AG04450 (cell line): ENCODE measurements at regions of chr7 and their contacts with region 1.

Region 1: GRCh38 chr7:157273208-157274093 is 63.4 kb upstream of the DNAJB6 start:
- DNase-seq: peak; percentile 62
- H3K4me3 ChIP-seq: no peak overlapping the region
- H3K27ac ChIP-seq: no peak overlapping the region
- H3K27me3 ChIP-seq: no peaks in the 10 kb centered on the region
- CTCF ChIP-seq: peak; percentile 98

Region 2: GRCh38 chr7:156979711-156980110 is 293.7 kb before region 1 on chr7:
- CTCF ChIA-PET with region 1: interaction called, 10 read pairs
- POLR2A ChIA-PET with region 1: no interaction called
- DNase-seq: no peak
- H3K4me3 ChIP-seq: no peak overlapping the region
- H3K27ac ChIP-seq: no peak overlapping the region
- H3K27me3 ChIP-seq: no peaks in the 10 kb centered on the region
- CTCF ChIP-seq: no peak

Region 3: DNA sequence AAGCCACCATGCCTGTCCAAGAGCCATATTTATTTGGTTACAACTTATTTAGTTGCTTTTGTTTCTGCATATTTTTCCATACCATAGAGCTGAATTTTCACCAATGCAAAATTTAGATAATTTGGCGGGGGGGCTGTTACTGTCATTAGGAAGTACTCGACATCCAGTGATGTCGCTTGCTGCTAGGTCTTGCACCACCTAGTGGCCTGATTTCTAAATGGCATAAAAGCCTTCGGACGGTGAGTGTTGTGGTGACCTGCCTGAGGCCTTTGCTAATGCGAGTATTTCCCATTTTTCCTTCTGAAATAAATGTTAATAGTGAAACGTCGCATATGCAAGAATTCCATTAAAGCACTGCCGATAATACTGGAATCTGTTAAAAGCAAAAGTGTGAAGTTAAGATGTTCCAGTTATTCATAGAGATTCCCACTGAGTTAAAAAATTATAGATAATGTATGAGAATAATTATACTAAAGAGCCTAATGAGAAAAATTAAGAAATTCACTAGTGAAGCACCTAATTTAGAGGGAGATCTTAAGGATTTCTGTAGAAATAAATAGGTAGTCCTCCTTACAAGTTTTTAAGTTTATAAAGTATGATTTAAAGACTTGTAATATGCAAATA is 22.7 kb before region 1 on chr7:
- CTCF ChIA-PET with region 1: interaction called, 13 read pairs
- POLR2A ChIA-PET with region 1: no interaction called
- DNase-seq: no peak
- H3K4me3 ChIP-seq: no peak overlapping the region
- H3K27ac ChIP-seq: no peak overlapping the region
- H3K27me3 ChIP-seq: no peaks in the 10 kb centered on the region
- CTCF ChIP-seq: peak; percentile 80

Region 4: DNA sequence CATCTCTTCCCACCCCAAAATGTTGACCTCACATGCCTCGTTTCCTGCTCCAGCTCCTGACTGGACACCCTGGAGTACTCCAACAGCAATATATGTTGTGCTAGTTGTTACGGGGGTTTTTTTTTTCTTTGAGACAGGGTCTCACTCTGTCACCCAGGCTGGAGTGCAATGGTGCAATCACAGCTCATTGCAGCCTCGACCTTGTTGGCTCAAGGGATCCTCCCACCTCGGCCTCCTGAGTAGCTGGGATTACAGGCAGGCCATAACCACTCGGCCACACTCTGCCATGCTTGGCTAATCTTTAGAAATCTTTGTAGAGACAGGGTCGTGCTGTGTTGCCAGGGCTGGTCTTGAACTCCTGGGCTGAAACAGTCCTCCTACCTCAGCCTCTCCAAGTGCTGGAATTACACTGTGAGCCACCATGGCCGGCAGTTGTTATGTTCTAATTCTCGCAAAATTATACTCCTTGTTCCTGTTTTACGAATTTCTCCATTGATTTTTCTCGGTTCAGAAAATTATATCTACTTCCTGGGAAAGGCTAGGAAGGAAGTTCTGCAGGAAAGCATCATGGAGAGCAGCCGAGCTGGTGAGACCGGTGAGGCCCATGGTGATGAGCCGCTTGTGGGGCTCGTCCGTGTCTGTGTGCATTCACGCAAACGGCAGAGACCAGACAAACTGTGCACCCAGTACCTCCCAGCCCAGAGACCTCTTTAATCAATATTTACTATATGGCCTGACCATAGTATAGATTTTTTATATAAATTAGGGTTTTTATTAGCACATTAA is 11.0 kb after region 1 on chr7:
- CTCF ChIA-PET with region 1: interaction called, 20 read pairs
- POLR2A ChIA-PET with region 1: no interaction called
- DNase-seq: no peak
- H3K4me3 ChIP-seq: no peak overlapping the region
- H3K27ac ChIP-seq: no peak overlapping the region
- H3K27me3 ChIP-seq: no peaks in the 10 kb centered on the region
- CTCF ChIP-seq: no peak

Region 5: DNA sequence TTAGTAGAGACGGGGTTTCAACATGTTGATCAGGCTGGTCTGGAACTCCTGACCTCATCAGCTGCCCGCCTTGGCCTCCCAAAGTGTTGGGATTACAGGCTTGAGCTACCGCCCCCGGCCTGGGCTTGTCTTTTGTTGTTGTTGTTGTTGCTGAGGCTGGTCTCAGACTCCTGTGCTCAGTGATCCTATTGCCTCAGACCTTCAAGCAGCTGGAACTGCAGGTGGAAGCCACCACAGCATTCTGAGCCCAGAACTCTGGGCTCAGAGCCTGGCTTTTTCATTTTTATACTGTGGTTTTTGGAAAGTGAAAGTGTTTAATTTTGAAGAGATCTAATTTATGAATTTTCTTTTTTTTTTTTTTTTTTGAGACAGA is 47.1 kb after region 1 on chr7:
- CTCF ChIA-PET with region 1: interaction called, 10 read pairs
- POLR2A ChIA-PET with region 1: no interaction called
- DNase-seq: no peak
- H3K4me3 ChIP-seq: no peak overlapping the region
- H3K27ac ChIP-seq: peak overlapping the region; percentile 31
- H3K27me3 ChIP-seq: no peaks in the 10 kb centered on the region
- CTCF ChIP-seq: no peak